ENCODE measurements at regions of chr16 and their contacts with region 1.

Region 1: DNA sequence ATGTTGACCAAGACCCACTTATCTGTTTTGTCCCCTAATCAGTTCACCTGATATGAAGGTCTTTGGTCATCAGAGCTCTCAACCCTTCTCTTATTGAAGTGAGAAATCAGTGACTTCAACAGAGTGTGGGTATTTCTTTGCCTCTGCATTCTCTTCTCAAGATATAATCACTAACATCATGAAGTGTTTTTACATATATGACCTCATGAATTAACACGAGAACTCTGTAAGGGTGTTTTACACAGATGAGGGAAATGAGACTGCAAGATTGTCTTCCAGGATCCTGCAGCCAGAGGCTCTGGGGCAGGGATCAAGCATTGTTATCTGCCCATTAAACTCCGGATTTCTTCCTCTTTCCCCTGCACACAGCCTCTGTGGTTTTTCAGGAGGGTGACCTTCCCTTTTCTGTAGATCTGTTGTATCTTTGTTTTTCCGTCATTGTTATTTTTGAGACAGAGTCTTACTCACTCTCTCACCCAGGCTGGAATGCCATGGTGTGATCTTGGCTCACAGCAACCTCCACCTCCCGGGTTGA is 22.7 kb downstream of the LCMT1 start:
- DNase-seq: no peak
- H3K4me3 ChIP-seq: no peak overlapping the region
- H3K27ac ChIP-seq: no peak overlapping the region
- H3K4me1 ChIP-seq: no peaks in the 10 kb centered on the region
- H3K27me3 ChIP-seq: no peaks in the 10 kb centered on the region
- CTCF ChIP-seq: no peak
- POLR2A ChIP-seq: no peak

Region 2: DNA sequence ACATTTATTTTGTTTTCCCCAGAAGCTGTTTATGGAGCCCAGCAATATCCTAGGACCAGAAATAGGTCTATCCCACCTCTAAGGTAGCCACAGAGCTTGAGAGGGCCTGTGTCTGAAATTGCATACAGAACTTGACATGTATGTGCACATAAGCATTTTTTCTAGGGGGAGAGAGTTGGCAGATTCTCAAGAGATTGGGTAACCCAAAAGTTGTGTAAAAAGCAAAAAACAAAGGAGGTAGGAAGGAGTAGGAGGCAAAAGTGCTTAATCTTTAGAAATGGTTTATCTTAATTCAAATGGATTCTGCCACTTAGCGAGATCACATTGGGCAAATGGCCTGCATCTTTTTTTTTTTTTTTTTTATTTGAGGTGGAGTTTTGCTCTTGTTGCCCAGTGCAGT is 1452.1 kb before region 1 on chr16:
- intact Hi-C with region 1: loop called (anchors 5 kb)
- DNase-seq: no peak
- H3K4me3 ChIP-seq: no peak overlapping the region
- H3K27ac ChIP-seq: no peak overlapping the region
- H3K4me1 ChIP-seq: no peaks in the 10 kb centered on the region
- H3K27me3 ChIP-seq: no peaks in the 10 kb centered on the region
- CTCF ChIP-seq: no peak
- POLR2A ChIP-seq: no peak

Region 3: DNA sequence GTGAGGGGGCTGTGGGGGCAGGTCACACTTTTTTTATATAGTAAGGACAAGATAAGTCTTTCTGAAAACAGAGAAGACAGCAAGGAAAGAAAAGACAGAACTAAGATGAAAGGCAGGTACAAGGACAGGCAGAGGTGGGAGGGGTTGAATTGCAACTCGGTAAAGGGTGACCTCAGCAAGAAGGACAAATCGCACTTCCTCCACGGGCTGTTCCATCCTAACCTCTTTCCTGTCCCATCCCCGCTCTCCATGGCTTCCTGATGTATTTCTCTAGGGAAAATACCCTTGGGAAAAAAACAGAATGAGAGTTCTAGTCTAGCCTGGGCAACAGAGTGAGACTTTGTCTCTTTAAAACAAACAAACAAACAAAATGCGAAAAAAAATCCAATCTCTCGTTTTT is 176.3 kb before region 1 on chr16:
- intact Hi-C with region 1: no loop called
- DNase-seq: no peak
- H3K4me3 ChIP-seq: no peak overlapping the region
- H3K27ac ChIP-seq: no peak overlapping the region
- H3K4me1 ChIP-seq: no peaks in the 10 kb centered on the region
- H3K27me3 ChIP-seq: no peaks in the 10 kb centered on the region
- CTCF ChIP-seq: no peak
- POLR2A ChIP-seq: no peak

Region 4: GRCh38 chr16:25118265-25119241 is 15.7 kb before region 1 on chr16:
- intact Hi-C with region 1: no loop called
- DNase-seq: no peak
- H3K4me3 ChIP-seq: no peak overlapping the region
- H3K27ac ChIP-seq: no peak overlapping the region
- H3K4me1 ChIP-seq: no peaks in the 10 kb centered on the region
- H3K27me3 ChIP-seq: no peaks in the 10 kb centered on the region
- CTCF ChIP-seq: no peak
- POLR2A ChIP-seq: no peak

Region 5: GRCh38 chr16:26727848-26728247 is 1593.6 kb after region 1 on chr16:
- intact Hi-C with region 1: no loop called
- DNase-seq: no peak
- H3K4me3 ChIP-seq: no peak overlapping the region
- H3K27ac ChIP-seq: no peak overlapping the region
- H3K4me1 ChIP-seq: no peaks in the 10 kb centered on the region
- H3K27me3 ChIP-seq: no peaks in the 10 kb centered on the region
- CTCF ChIP-seq: no peak
- POLR2A ChIP-seq: no peak